Naive thymus-derived CD4-positive, alpha-beta T cell (primary cell): ENCODE measurements at regions of chr3 and their contacts with region 1.

Region 1: DNA sequence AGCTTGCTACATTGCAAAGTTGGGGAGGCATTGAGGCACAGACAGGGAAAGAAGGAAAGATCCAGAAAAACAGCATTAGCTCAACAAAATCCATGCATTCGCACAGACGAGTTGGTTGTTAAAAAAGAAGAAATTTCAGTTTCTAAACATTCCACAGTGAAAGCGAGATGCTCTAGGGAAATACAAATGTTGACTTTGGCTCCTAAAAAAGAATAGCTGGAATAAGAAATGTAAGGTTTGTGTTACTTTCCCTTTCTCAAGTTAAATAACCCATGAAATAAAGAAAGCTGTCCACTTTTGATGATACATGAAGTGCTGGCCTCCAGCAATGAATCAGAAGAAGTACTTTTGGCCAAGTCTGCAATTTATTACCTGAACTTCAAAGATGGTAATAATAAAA is 465.1 kb downstream of the ERC2 start:
- DNase-seq: no peak
- ATAC-seq: no peak
- H3K4me3 ChIP-seq: no peak overlapping the region
- H3K4me3 Mint-ChIP-seq: no peak overlapping the region
- H3K27ac ChIP-seq: no peak overlapping the region
- H3K27ac Mint-ChIP-seq: no peak overlapping the region
- H3K4me1 ChIP-seq: no peaks in the 10 kb centered on the region
- H3K4me1 Mint-ChIP-seq: peaks cover 0 to 4% (median 0%) of the 10 kb centered on the region in 7 donors
- H3K27me3 ChIP-seq: no peaks in the 10 kb centered on the region
- H3K27me3 Mint-ChIP-seq: peaks cover 0 to 7% (median 0%) of the 10 kb centered on the region in 5 donors

Region 2: GRCh38 chr3:55873523-55874254 is 129.4 kb before region 1 on chr3:
- CTCF ChIA-PET with region 1: no interaction called
- POLR2A ChIA-PET with region 1: no interaction called
- intact Hi-C with region 1: no loop called
- DNase-seq: no peak
- ATAC-seq: no peak
- H3K4me3 ChIP-seq: no peak overlapping the region
- H3K4me3 Mint-ChIP-seq: no peak overlapping the region
- H3K27ac ChIP-seq: no peak overlapping the region
- H3K27ac Mint-ChIP-seq: no peak overlapping the region
- H3K4me1 ChIP-seq: no peaks in the 10 kb centered on the region
- H3K4me1 Mint-ChIP-seq: no peaks in the 10 kb centered on the region
- H3K27me3 ChIP-seq: no peaks in the 10 kb centered on the region
- H3K27me3 Mint-ChIP-seq: peaks cover 0 to 9% (median 0%) of the 10 kb centered on the region in 5 donors

Region 3: GRCh38 chr3:55951388-55951787 is 51.7 kb before region 1 on chr3:
- CTCF ChIA-PET with region 1: no interaction called
- POLR2A ChIA-PET with region 1: no interaction called
- intact Hi-C with region 1: loop called in 1 of 2 experiments (anchors 1 kb)
- DNase-seq: no peak
- ATAC-seq: no peak
- H3K4me3 ChIP-seq: no peak overlapping the region
- H3K4me3 Mint-ChIP-seq: no peak overlapping the region
- H3K27ac ChIP-seq: no peak overlapping the region
- H3K27ac Mint-ChIP-seq: no peak overlapping the region
- H3K4me1 ChIP-seq: no peaks in the 10 kb centered on the region
- H3K4me1 Mint-ChIP-seq: peaks cover 0 to 4% (median 0%) of the 10 kb centered on the region in 7 donors
- H3K27me3 ChIP-seq: no peaks in the 10 kb centered on the region
- H3K27me3 Mint-ChIP-seq: peaks cover 0 to 3% (median 0%) of the 10 kb centered on the region in 5 donors